Right lobe of liver (tissue), 6 donors: ENCODE measurements at regions of chr9 and their contacts with region 1.

Region 1: GRCh38 chr9:136551401-136552116 is 5.7 kb upstream of the NOTCH1 start:
- DNase-seq: no peak
- ATAC-seq: no peak
- H3K4me3 ChIP-seq: no peak overlapping the region
- H3K27ac ChIP-seq: peak overlapping the region in 1 of 3 donors; percentile 13
- H3K4me1 ChIP-seq: peaks cover 0 to 33% (median 17%) of the 10 kb centered on the region in 4 donors
- H3K27me3 ChIP-seq: no peaks in the 10 kb centered on the region
- CTCF ChIP-seq: no peak
- POLR2A ChIP-seq: no peak

Region 2: GRCh38 chr9:136619742-136620440 is 68.3 kb after region 1 on chr9:
- intact Hi-C with region 1: loop called (anchors 5 to 10 kb)
- DNase-seq: peak; percentile 95 to 98 (median 97)
- ATAC-seq: peak; percentile 84 to 86 (median 84)
- H3K4me3 ChIP-seq: no peak overlapping the region
- H3K27ac ChIP-seq: peak overlapping the region; percentile 74 to 92 (median 80)
- H3K4me1 ChIP-seq: peaks cover 5 to 47% (median 24%) of the 10 kb centered on the region in 4 donors
- H3K27me3 ChIP-seq: no peaks in the 10 kb centered on the region
- CTCF ChIP-seq: peak in 1 of 4 donors; percentile 15
- POLR2A ChIP-seq: peak; percentile 69